ENCODE measurements at regions of chr12 and their contacts with region 1.

Region 1: GRCh38 chr12:64551698-64552097 is 58.6 kb upstream of the RASSF3 start:
- DNase-seq: no peak
- ATAC-seq: no peak
- H3K4me3 ChIP-seq: no peak overlapping the region
- H3K27ac ChIP-seq: no peak overlapping the region
- H3K4me1 ChIP-seq: 0 out of 3 replicates have a peak, but pooled peaks cover 4% of the 10 kb centered on the region
- CTCF ChIP-seq: no peak
- EP300 ChIP-seq: no peak
- POLR2A ChIP-seq: no peak
- RAD21 ChIP-seq: no peak

Region 2: DNA sequence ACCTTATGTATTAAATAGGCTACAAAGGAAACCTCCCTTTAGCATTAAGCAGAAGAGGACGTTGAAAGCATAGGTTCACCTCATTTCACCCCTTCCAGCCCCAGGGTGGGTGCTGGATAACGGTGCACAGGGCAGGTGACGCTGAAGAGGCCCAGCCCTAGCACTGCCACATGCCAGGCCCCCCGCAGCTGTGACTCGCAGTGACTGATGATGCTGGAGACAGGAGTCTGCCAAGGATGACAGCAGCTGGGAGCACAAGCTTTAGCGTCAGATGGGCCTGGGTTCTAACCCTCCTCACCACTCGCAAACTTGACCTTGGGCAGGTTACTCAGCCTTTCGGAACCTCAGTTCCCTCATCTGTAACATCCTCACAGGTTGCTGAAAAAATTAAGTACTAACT is 23.1 kb before region 1 on chr12:
- CTCF ChIA-PET with region 1: interaction called, 50 read pairs
- POLR2A ChIA-PET with region 1: no interaction called
- DNase-seq: no peak
- ATAC-seq: 0 out of 6 replicates have a peak, but pooled peaks of 1 of the 2 experiments have one; percentile 30
- H3K4me3 ChIP-seq: no peak overlapping the region
- H3K27ac ChIP-seq: no peak overlapping the region
- H3K4me1 ChIP-seq: no peaks in the 10 kb centered on the region
- CTCF ChIP-seq: no peak
- EP300 ChIP-seq: no peak
- POLR2A ChIP-seq: no peak
- RAD21 ChIP-seq: no peak

Region 3: GRCh38 chr12:64566732-64567399 is 15.2 kb after region 1 on chr12:
- CTCF ChIA-PET with region 1: interaction called, 85 read pairs
- POLR2A ChIA-PET with region 1: no interaction called
- DNase-seq: no peak
- ATAC-seq: no peak
- H3K4me3 ChIP-seq: no peak overlapping the region
- H3K27ac ChIP-seq: no peak overlapping the region
- H3K4me1 ChIP-seq: peaks cover under 1% of the 10 kb centered on the region; the same call in 2 of the 3 replicates
- CTCF ChIP-seq: no peak
- EP300 ChIP-seq: no peak
- POLR2A ChIP-seq: no peak
- RAD21 ChIP-seq: no peak

Region 4: DNA sequence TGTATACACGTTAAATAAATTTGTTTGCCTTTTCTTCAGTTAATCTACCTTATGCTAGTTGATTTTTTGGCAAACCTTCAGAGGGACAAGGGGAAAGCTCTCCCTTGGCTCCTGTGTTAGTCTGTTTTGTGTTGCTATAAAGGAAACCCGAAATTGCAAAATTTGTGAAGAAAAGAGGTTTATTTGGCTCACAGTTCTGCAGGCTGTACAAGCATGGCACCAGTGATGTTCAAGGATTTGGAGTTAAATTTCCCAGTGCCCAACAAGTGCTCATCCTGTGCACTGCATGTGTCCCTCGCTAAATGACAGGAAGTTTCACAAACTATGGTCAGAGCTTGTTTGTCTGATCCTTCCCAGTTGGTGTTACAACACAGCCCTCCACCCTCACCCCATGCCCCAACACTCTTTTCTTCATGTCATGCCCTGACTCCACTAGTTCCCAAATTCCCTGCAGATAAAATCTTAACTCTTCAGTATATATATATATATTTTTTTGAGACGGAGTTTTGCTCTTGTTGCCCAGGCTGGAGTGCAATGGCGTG is 44.6 kb after region 1 on chr12:
- CTCF ChIA-PET with region 1: interaction called, 42 read pairs
- POLR2A ChIA-PET with region 1: no interaction called
- DNase-seq: no peak
- ATAC-seq: no peak
- H3K4me3 ChIP-seq: no peak overlapping the region
- H3K27ac ChIP-seq: no peak overlapping the region
- H3K4me1 ChIP-seq: no peaks in the 10 kb centered on the region
- CTCF ChIP-seq: no peak
- EP300 ChIP-seq: no peak
- POLR2A ChIP-seq: no peak
- RAD21 ChIP-seq: no peak

Region 5: GRCh38 chr12:64679487-64679983 is 127.8 kb after region 1 on chr12:
- CTCF ChIA-PET with region 1: interaction called, 39 read pairs
- POLR2A ChIA-PET with region 1: no interaction called
- DNase-seq: peak; percentile 82 to 91
- ATAC-seq: peak; percentile 85 to 86
- H3K4me3 ChIP-seq: peak overlapping the region; percentile 34
- H3K27ac ChIP-seq: peak overlapping the region; percentile 86 to 92
- H3K4me1 ChIP-seq: peaks cover 88% of the 10 kb centered on the region
- CTCF ChIP-seq: no peak
- EP300 ChIP-seq: no peak
- POLR2A ChIP-seq: no peak
- RAD21 ChIP-seq: no peak

Region 6: GRCh38 chr12:64706306-64706705 is 154.6 kb after region 1 on chr12:
- CTCF ChIA-PET with region 1: interaction called, 23 read pairs
- POLR2A ChIA-PET with region 1: no interaction called
- DNase-seq: no peak
- ATAC-seq: peak; percentile 42 to 46; a peak in 4 of 6 replicates
- H3K4me3 ChIP-seq: no peak overlapping the region
- H3K27ac ChIP-seq: no peak overlapping the region
- H3K4me1 ChIP-seq: no peaks in the 10 kb centered on the region
- CTCF ChIP-seq: no peak
- EP300 ChIP-seq: no peak
- POLR2A ChIP-seq: no peak
- RAD21 ChIP-seq: no peak